Heart left ventricle (tissue), 16 donors: ENCODE measurements at regions of chr1 and their contacts with region 1.

Region 1: GRCh38 chr1:155050560-155051341 is at the start of gene ADAM15:
- DNase-seq: peak; percentile 86 to 94 (median 86)
- ATAC-seq: peak; percentile 43 to 90 (median 72)
- H3K4me3 ChIP-seq: peak within 1 kb of the TSS; percentile 54 to 99 (median 86)
- H3K27ac ChIP-seq: peak within 1 kb of the TSS; percentile 86 to 99 (median 94)
- H3K4me1 ChIP-seq: peaks cover 0 to 43% (median 23%) of the 10 kb centered on the region in 12 donors
- H3K27me3 ChIP-seq: no peaks in the 10 kb centered on the region
- CTCF ChIP-seq: peak; percentile 85 to 97 (median 92)
- POLR2A ChIP-seq: no peak
- total RNA-seq, gene ADAM15: 55.8 to 199 (median 67.5) TPM

Region 2: DNA sequence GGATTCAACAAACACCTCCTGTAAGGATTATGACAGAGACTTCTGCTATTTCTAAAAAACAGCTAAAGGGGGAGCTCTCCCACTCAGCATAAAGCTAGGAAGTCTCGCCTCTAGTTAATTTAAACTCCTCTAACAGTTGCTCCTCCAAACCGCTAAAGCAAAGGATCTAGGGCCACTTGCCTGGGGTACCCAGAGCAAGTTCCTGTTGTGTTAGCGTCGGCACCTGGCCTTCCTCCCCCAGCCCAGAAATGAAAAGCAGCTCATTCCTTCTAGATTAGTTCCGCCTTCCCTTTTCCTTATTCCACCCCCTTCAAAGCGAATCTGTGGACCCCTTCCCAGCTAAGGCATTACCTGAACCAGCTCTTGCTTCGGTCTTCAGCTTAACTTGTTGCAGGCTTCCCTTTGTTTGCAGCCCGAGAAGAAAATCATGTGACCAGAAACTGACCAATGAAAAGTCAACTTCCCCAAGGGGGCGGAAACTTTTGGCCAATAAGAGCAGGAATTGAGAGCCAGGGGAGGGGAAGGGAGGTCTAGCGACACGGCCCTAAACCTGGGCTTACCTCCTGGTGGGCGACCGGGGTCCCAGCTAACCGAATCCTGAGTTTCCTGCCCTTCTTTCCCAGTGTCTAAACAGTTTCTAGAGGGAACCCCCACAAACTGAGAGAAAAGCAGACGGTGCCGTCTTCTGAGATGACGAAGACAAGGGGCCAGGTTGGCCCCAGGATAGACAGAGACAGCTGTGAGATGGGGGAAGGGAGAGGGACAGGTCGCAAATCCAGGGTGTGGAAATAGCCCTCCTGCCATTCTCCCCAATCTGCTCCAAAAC is 94.8 kb before region 1 on chr1 and contains the start of gene PBXIP1:
- intact Hi-C with region 1: loop called in 2 of 10 experiments (anchors 5 to 10 kb)
- DNase-seq: peak; percentile 68 to 89 (median 79)
- ATAC-seq: peak; percentile 79 to 90 (median 82)
- H3K4me3 ChIP-seq: peak within 1 kb of the TSS; percentile 38 to 82 (median 61)
- H3K27ac ChIP-seq: peak within 1 kb of the TSS; percentile 59 to 85 (median 79)
- H3K4me1 ChIP-seq: peaks cover 8 to 74% (median 48%) of the 10 kb centered on the region in 12 donors
- H3K27me3 ChIP-seq: no peaks in the 10 kb centered on the region
- CTCF ChIP-seq: peak in 8 of 12 donors; percentile 6 to 45 (median 23)
- POLR2A ChIP-seq: peak in 1 of 2 donors; percentile 47
- total RNA-seq, gene PBXIP1: 38.2 to 70.4 (median 51.7) TPM

Region 3: GRCh38 chr1:154961497-154962262 is 89.1 kb before region 1 on chr1 and contains the start of gene PYGO2:
- intact Hi-C with region 1: loop called in 3 of 10 experiments (anchors 5 to 10 kb)
- DNase-seq: peak; percentile 82 to 92 (median 85)
- ATAC-seq: peak; percentile 67 to 89 (median 86)
- H3K4me3 ChIP-seq: peak within 1 kb of the TSS; percentile 80 to 99 (median 89)
- H3K27ac ChIP-seq: peak within 1 kb of the TSS; percentile 94 to 100 (median 99)
- H3K4me1 ChIP-seq: peaks cover 1 to 44% (median 23%) of the 10 kb centered on the region in 12 donors
- H3K27me3 ChIP-seq: no peaks in the 10 kb centered on the region
- CTCF ChIP-seq: peak; percentile 22 to 95 (median 68)
- POLR2A ChIP-seq: peak in 1 of 2 donors; percentile 84
- total RNA-seq, gene PYGO2: 10.7 to 19.2 (median 16.3) TPM